Left lung (tissue), 14 donors: ENCODE measurements at regions of chr22 and their contacts with region 1.

Region 1: DNA sequence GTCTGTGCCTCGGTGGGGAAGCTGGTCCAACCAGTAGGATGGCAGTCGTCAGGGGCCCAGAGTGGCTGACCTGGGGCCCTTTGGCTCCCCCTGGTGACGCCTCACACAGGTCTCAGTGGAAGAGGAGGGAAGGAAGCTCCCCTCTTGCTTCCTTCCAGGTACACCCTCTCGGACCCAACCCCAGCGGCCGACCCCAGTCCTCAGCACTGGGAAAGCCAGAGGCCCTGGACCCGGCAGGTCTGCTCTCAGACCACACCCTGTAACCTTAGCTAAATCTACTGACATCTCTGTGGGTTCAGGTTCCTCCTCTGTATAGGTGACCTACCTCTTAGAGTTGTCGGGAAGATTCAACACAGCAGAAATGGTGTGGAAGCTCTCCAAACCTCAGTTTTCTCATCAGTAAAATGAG is 3.4 kb upstream of the SCUBE1 start:
- DNase-seq: peak in 3 of 4 donors; percentile 44 to 85 (median 69)
- ATAC-seq: peak; percentile 75
- H3K4me3 ChIP-seq: no peak overlapping the region
- H3K27ac ChIP-seq: no peak overlapping the region
- H3K4me1 ChIP-seq: peaks cover 0 to 44% of the 10 kb centered on the region in 2 donors
- H3K27me3 ChIP-seq: peaks cover 24 to 46% of the 10 kb centered on the region in 2 donors
- CTCF ChIP-seq: peak; percentile 53 to 60

Region 2: DNA sequence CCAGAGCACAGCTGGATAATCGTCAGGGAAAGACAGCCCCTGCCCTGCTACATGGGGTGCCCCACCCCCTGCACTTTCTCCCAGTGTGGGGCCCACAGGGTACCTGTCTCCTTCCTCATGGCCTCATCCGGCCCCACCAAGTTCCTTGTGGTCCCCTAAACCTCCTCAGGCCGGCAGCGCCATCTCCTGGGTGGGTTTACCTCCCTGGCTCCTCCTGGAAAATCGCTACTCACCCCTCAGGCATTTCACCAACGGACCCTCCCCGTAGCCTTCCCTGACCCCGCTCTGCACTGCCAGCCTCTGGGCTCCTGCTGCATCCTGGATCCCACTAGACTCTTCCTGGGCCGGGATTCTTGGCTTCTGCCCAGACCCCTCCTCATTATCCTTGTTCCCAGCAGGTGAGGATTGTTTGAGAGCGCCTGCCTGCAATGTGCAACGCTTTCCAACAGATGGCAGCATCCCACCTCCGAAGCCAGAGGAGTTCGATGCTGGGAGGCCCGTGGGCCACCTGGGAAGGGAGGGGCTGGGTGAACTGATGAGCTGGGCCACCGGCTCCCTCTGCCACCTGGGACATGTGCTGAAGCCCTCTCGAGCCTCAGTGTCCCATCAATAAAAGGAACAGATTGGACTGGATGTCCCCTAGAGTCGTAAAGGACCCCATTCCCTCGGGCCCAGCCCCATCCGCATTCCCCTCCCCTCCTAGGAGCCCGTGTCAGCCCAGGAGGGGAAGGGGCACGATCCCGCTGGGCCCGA is 115.4 kb before region 1 on chr22:
- intact Hi-C with region 1: loop called in 1 of 2 experiments (anchors 10 kb)
- DNase-seq: peak in 2 of 4 donors; percentile 55 to 57
- ATAC-seq: peak; percentile 85
- H3K4me3 ChIP-seq: no peak overlapping the region
- H3K27ac ChIP-seq: no peak overlapping the region
- H3K4me1 ChIP-seq: peaks cover 0 to 7% of the 10 kb centered on the region in 2 donors
- H3K27me3 ChIP-seq: no peaks in the 10 kb centered on the region
- CTCF ChIP-seq: peak; percentile 86 to 88

Region 3: DNA sequence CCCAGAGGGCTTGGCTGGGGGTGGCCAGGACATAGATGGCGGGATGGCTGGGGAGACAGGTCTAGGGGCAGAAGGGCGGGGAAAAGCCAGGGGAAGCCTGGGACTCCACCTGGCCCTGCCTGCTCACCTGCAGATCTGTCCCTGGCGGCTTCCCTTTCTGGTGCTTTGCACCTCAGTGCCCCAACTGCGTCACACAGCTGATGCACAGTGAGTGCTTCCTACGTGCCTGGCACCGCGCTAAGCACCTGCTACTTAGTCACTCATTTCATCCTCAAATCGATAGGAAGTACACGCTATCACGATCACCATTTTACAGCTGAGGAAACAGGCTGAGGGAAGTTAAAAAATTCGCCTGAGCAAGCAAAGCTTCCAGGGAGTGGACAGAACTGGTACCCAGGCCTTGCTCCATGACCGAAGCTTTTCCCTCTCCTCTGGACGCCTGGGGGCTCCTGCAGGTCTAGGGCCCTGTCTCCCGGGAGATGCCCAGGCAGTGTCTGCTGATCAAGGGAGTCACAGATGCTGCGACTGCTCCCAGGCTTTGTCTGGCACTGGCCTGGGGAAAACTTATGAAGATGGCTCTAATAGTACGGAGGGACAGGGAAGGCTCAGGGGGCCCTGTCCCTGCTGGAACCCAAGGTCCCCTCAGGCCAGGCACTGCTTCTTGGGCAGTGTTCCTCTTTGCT is 96.6 kb before region 1 on chr22:
- intact Hi-C with region 1: no loop called
- DNase-seq: no peak
- ATAC-seq: no peak
- H3K4me3 ChIP-seq: no peak overlapping the region
- H3K27ac ChIP-seq: no peak overlapping the region
- H3K4me1 ChIP-seq: no peaks in the 10 kb centered on the region
- H3K27me3 ChIP-seq: no peaks in the 10 kb centered on the region
- CTCF ChIP-seq: no peak

Region 4: GRCh38 chr22:43273902-43274484 is 72.5 kb before region 1 on chr22:
- intact Hi-C with region 1: loop called in 1 of 2 experiments (anchors 5 kb)
- DNase-seq: peak in 1 of 4 donors; percentile 66
- ATAC-seq: peak; percentile 84
- H3K4me3 ChIP-seq: no peak overlapping the region
- H3K27ac ChIP-seq: no peak overlapping the region
- H3K4me1 ChIP-seq: peaks cover 0 to 7% of the 10 kb centered on the region in 2 donors
- H3K27me3 ChIP-seq: no peaks in the 10 kb centered on the region
- CTCF ChIP-seq: peak; percentile 53 to 60

Region 5: GRCh38 chr22:43385770-43386641 is 39.5 kb after region 1 on chr22:
- intact Hi-C with region 1: no loop called
- DNase-seq: peak; percentile 79 to 95 (median 87)
- ATAC-seq: peak; percentile 97
- H3K4me3 ChIP-seq: no peak overlapping the region
- H3K27ac ChIP-seq: no peak overlapping the region
- H3K4me1 ChIP-seq: peaks cover 0 to 12% of the 10 kb centered on the region in 2 donors
- H3K27me3 ChIP-seq: peaks cover 0 to 42% of the 10 kb centered on the region in 2 donors
- CTCF ChIP-seq: peak; percentile 85 to 87